ENCODE measurements at regions of chr12 and their contacts with region 1.

Region 1: DNA sequence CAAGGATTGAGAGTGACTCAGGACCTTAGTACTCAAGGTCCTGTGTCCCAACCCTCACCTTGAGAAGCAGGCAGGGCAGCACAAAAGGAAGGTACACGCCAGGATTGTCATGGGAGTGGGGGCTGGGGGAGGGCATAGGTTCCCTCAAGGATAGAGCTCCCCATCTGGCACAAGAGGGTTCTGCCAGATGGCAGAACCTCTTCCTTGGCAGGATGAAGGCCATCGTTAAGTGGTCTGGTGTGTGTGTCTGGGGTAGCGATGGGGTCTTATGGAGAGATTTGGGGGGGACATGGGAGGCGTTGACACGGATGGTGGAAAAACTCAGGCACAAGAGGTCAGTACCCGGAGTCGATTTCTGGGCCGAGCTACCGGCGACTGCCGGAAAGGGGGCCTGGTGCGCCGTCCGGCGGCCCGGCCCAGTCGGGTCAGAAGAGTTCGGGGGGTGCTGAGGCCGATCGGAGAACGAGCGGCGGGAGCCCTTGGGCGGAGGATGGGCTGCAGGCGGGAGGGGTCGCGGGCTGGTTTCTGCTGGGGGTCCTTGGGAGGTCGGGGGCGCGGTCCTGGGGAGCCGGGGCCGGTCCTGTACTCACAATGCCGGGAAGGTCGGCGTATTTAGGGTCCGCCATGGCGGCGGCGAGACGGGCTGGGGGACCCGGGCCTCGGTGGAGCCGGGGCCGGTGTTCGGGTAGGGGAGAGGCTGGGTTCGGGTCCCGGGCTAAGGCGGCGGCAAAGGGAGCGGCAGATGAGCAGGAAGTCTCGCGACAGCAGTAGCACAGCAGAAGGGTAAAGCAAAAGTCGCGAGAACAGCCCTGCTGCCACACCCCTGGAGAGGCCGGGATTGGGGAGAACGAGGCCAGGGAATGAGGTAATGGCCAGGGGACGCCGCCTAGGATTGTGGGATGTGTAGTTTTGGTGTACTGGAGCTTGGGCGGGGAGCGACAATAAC is at the start of gene DCTN2:
- DNase-seq: peak; percentile 91
- H3K4me3 ChIP-seq: peak within 1 kb of the TSS; percentile 82
- H3K27ac ChIP-seq: peak within 1 kb of the TSS; percentile 31
- H3K27me3 ChIP-seq: peaks cover 33% of the 10 kb centered on the region
- CTCF ChIP-seq: no peak
- polyA plus RNA-seq, gene DCTN2: 146 and 160 TPM in 2 replicates

Region 2: GRCh38 chr12:57520053-57520871 is 26.4 kb before region 1 on chr12 and contains the start of gene DDIT3:
- CTCF ChIA-PET with region 1: no interaction called
- POLR2A ChIA-PET with region 1: interaction called, 10 read pairs
- DNase-seq: peak; percentile 98
- H3K4me3 ChIP-seq: peak within 1 kb of the TSS; percentile 100
- H3K27ac ChIP-seq: peak within 1 kb of the TSS; percentile 98
- H3K27me3 ChIP-seq: no peaks in the 10 kb centered on the region
- CTCF ChIP-seq: no peak
- polyA plus RNA-seq, gene DDIT3: 64.9 and 69.0 TPM in 2 replicates